T-cell (primary cell): ENCODE measurements at regions of chr6 and their contacts with region 1.

Region 1: DNA sequence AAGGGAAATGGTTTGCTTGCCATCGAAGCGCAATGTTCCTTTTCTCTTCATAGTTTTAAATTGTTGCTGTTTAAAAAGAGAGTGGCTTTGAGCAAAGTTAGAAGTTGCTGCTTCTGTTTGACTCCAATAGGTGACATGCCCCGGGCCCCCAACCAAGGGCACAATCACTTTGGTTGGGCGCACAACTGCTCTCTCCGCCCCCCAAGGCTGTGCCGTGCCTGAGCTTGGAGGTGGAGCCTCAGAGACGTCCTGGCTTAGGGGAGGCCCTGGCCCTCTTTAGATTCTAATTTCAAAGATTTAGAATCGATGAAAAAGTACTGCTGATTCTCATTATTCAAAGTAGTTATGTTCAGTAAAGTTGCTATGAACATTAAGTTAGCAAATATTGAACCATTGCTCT is 725.9 kb downstream of the COL12A1 start:
- DNase-seq: no peak
- ATAC-seq: no peak
- H3K4me3 ChIP-seq: no peak overlapping the region
- H3K4me3 Mint-ChIP-seq: no peak overlapping the region
- H3K27ac ChIP-seq: no peak overlapping the region
- H3K27ac Mint-ChIP-seq: no peak overlapping the region
- H3K4me1 ChIP-seq: no peaks in the 10 kb centered on the region
- H3K4me1 Mint-ChIP-seq: no peaks in the 10 kb centered on the region
- H3K27me3 ChIP-seq: no peaks in the 10 kb centered on the region
- H3K27me3 Mint-ChIP-seq: no peaks in the 10 kb centered on the region

Region 2: GRCh38 chr6:74491844-74492374 is 11.9 kb after region 1 on chr6:
- CTCF ChIA-PET with region 1: interaction called in 1 of 2 experiments, 13 read pairs
- POLR2A ChIA-PET with region 1: no interaction called
- DNase-seq: no peak
- ATAC-seq: no peak
- H3K4me3 ChIP-seq: no peak overlapping the region
- H3K4me3 Mint-ChIP-seq: no peak overlapping the region
- H3K27ac ChIP-seq: no peak overlapping the region
- H3K27ac Mint-ChIP-seq: no peak overlapping the region
- H3K4me1 ChIP-seq: no peaks in the 10 kb centered on the region
- H3K4me1 Mint-ChIP-seq: no peaks in the 10 kb centered on the region
- H3K27me3 ChIP-seq: no peaks in the 10 kb centered on the region
- H3K27me3 Mint-ChIP-seq: no peaks in the 10 kb centered on the region